Calu3 (cell line): ENCODE measurements at regions of chr16 and their contacts with region 1.

Region 1: GRCh38 chr16:4253394-4254150 is 11.7 kb upstream of the SRL start:
- DNase-seq: peak; percentile 100
- H3K4me3 Mint-ChIP-seq: peak overlapping the region; percentile 95
- H3K27ac Mint-ChIP-seq: peak overlapping the region; percentile 96
- H3K4me1 Mint-ChIP-seq: no peaks in the 10 kb centered on the region
- H3K27me3 Mint-ChIP-seq: no peaks in the 10 kb centered on the region
- CTCF ChIP-seq: no peak

Region 2: DNA sequence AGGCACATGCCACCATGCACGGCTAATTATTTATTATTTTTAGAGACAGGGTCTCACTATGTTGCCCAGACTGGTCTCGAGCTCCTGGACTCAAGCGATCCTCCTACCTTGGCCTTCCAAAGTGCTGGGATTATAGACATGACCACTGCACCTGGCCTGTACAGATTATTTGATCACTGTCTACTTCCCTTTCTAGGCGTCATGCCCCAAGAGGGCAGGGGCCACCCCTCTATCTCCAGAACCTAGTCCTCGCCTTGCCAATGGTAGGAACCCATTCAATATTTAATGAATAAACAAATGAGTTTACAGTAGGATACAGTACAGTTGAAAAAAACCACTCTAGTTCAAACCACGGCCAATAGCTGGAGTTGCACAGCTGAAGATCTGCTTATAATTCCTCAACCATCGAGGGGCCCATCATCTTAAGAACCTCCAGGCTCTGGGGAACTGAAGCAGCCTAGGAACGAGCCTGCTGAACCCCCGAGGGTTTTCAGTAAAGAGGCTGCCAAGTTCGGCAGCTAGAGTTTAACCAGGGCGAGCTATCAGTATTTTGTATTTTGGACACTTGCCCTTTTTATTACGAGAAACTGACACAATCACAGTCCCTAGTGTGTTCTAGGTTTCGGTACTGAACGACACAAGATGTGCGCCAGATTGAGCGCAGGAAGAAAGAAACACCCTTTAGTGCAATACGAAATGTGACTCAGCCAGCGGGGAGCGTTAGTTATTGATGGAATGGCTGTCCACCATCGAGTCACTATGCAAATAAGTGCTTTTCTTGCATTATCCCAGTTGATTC is 152.0 kb before region 1 on chr16:
- CTCF ChIA-PET with region 1: no interaction called
- intact Hi-C with region 1: no loop called
- DNase-seq: no peak
- H3K4me3 Mint-ChIP-seq: no peak overlapping the region
- H3K27ac Mint-ChIP-seq: no peak overlapping the region
- H3K4me1 Mint-ChIP-seq: no peaks in the 10 kb centered on the region
- H3K27me3 Mint-ChIP-seq: no peaks in the 10 kb centered on the region
- CTCF ChIP-seq: no peak

Region 3: GRCh38 chr16:4200000-4200780 is 53.4 kb before region 1 on chr16:
- CTCF ChIA-PET with region 1: interaction called, 127 read pairs
- intact Hi-C with region 1: loop called (anchors 1 kb)
- DNase-seq: peak; percentile 90
- H3K4me3 Mint-ChIP-seq: peak overlapping the region; percentile 30
- H3K27ac Mint-ChIP-seq: peak overlapping the region; percentile 69
- H3K4me1 Mint-ChIP-seq: peaks cover 12% of the 10 kb centered on the region
- H3K27me3 Mint-ChIP-seq: no peaks in the 10 kb centered on the region
- CTCF ChIP-seq: peak; percentile 85

Region 4: DNA sequence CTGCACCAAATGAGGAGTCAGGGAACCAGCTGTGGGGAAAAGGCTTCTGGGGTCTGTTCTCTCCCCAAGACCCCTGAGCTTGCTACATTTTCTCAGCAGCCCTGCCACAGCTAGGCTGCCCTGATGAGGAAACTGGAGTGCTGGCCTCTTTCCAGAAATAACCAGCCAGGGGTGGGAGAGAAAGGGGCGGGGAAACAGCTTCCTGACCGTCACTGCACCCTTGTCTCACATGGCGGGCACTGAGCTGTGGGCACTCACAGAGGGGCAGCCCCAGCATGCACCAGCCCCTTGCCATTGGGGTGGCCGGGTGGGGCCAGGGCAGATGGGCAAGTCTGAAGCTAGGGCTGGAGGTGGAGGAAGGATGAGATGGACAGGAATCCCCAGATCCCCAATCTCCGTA is 14.6 kb before region 1 on chr16:
- CTCF ChIA-PET with region 1: interaction called, 10 read pairs
- intact Hi-C with region 1: no loop called
- DNase-seq: no peak
- H3K4me3 Mint-ChIP-seq: no peak overlapping the region
- H3K27ac Mint-ChIP-seq: no peak overlapping the region
- H3K4me1 Mint-ChIP-seq: no peaks in the 10 kb centered on the region
- H3K27me3 Mint-ChIP-seq: peaks cover 68% of the 10 kb centered on the region
- CTCF ChIP-seq: no peak

Region 5: DNA sequence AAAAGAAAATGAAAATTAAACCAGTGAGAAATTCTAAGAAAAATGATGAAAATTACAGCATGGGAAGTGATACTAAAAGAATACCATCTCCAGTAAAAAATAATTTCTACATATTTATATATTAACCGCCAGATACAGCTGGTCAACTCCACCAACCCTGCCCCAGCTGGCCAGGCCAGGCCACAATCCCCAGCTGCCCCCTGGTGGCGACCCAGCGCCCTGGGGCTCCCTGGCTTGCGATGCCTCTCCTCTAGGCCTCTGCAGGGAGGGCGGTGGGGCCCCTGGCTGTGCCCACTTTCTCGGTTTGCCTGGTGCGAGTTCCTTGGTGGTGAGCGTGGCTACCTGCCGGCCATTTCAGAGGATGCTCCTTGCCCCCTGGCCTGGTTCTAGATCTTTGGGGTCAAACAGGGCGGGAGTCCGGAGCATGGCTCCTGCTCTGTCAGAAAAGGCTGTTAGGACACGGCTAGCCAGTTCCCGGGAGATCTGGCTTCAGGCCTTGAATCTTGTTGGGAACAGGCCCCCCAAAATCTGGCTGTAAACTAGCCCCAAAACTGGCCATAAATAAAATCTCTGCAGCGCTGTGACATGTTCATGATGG is 76.8 kb after region 1 on chr16:
- CTCF ChIA-PET with region 1: interaction called, 17 read pairs
- intact Hi-C with region 1: no loop called
- DNase-seq: peak; percentile 96
- H3K4me3 Mint-ChIP-seq: no peak overlapping the region
- H3K27ac Mint-ChIP-seq: no peak overlapping the region
- H3K4me1 Mint-ChIP-seq: peaks cover 8% of the 10 kb centered on the region
- H3K27me3 Mint-ChIP-seq: no peaks in the 10 kb centered on the region
- CTCF ChIP-seq: peak; percentile 99